HepG2 (cell line): ENCODE measurements at regions of chrX and their contacts with region 1.

Region 1: GRCh38 chrX:18984381-18985185 is 669 bp upstream of the PHKA2 start:
- DNase-seq: peak; percentile 70
- ATAC-seq: peak; percentile 83
- H3K4me3 ChIP-seq: peak overlapping the region; percentile 75 to 82 (median 80)
- H3K27ac ChIP-seq: peak overlapping the region; percentile 95
- H3K4me1 ChIP-seq: peaks cover 28% of the 10 kb centered on the region
- H3K27me3 ChIP-seq: no peaks in the 10 kb centered on the region
- CTCF ChIP-seq: peak; percentile 36
- EP300 ChIP-seq: no peak; a peak in 1 of 4 replicates
- POLR2A ChIP-seq: peak; percentile 50 to 62; a peak in 3 of 4 replicates
- RAD21 ChIP-seq: no peak

Region 2: GRCh38 chrX:17744896-17745523 is 1239.6 kb before region 1 on chrX:
- CTCF ChIA-PET with region 1: no interaction called
- POLR2A ChIA-PET with region 1: no interaction called
- in situ Hi-C with region 1: no loop called
- intact Hi-C with region 1: loop called (anchors 5 kb)
- DNase-seq: peak; percentile 81
- ATAC-seq: peak; percentile 64
- H3K4me3 ChIP-seq: peak overlapping the region; percentile 34 to 48 (median 34); a peak in 5 of 6 replicates
- H3K27ac ChIP-seq: peak overlapping the region; percentile 79
- H3K4me1 ChIP-seq: peaks cover 71% of the 10 kb centered on the region
- H3K27me3 ChIP-seq: no peaks in the 10 kb centered on the region
- CTCF ChIP-seq: no peak
- EP300 ChIP-seq: peak in 1 of 2 experiments; percentile 83; a peak in 2 of 4 replicates
- POLR2A ChIP-seq: no peak
- RAD21 ChIP-seq: no peak

Region 3: GRCh38 chrX:18961686-18962085 is 22.9 kb before region 1 on chrX:
- CTCF ChIA-PET with region 1: no interaction called
- POLR2A ChIA-PET with region 1: interaction called, 4 read pairs
- in situ Hi-C with region 1: no loop called
- intact Hi-C with region 1: loop called (anchors 2 kb)
- DNase-seq: no peak
- ATAC-seq: no peak
- H3K4me3 ChIP-seq: no peak overlapping the region
- H3K27ac ChIP-seq: no peak overlapping the region
- H3K4me1 ChIP-seq: peaks cover 6% of the 10 kb centered on the region; the same call in 1 of the 2 replicates
- H3K27me3 ChIP-seq: no peaks in the 10 kb centered on the region
- CTCF ChIP-seq: no peak
- EP300 ChIP-seq: no peak
- POLR2A ChIP-seq: no peak
- RAD21 ChIP-seq: no peak